Sigmoid colon (tissue), 7 donors: ENCODE measurements at regions of chr5 and their contacts with region 1.

Region 1: GRCh38 chr5:56270568-56271392 is 37.6 kb upstream of the ANKRD55 start:
- DNase-seq: peak; percentile 89
- H3K4me3 ChIP-seq: no peak overlapping the region
- H3K27ac ChIP-seq: no peak overlapping the region
- H3K4me1 ChIP-seq: peaks cover 0 to 11% (median 2%) of the 10 kb centered on the region in 4 donors
- H3K27me3 ChIP-seq: no peaks in the 10 kb centered on the region
- CTCF ChIP-seq: peak; percentile 87 to 97 (median 95)
- EP300 ChIP-seq: no peak
- POLR2A ChIP-seq: no peak

Region 2: DNA sequence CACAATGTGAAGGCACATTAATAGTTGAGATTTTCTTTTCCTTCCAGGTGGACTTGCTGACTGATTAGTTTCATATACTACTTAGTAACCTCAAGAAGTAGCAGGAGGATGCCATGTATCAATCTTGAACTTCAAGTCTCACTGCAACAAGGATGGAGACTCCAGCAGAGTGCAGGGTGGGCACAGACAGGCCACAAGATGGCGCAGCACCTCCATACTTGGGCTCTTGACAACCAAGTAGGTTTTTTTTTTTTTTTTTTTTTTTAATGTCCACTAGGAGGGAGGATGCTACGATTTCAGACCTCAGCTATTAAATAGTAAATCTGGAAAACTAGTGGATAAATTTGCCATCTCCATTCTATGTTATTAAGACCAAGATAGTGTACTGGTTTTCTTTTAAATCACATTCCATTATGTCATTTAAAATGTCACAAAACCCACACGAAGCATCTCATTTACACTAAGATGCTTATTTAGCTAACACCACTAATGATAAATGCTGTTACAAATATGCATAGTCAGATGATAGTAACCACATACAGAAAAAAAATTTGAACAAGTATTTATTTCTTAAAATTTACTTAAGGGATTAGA is 334.6 kb before region 1 on chr5:
- intact Hi-C with region 1: loop called (anchors 10 kb)
- DNase-seq: peak; percentile 87
- H3K4me3 ChIP-seq: no peak overlapping the region
- H3K27ac ChIP-seq: no peak overlapping the region
- H3K4me1 ChIP-seq: no peaks in the 10 kb centered on the region
- H3K27me3 ChIP-seq: no peaks in the 10 kb centered on the region
- CTCF ChIP-seq: peak; percentile 52 to 75 (median 64)
- EP300 ChIP-seq: no peak
- POLR2A ChIP-seq: no peak

Region 3: DNA sequence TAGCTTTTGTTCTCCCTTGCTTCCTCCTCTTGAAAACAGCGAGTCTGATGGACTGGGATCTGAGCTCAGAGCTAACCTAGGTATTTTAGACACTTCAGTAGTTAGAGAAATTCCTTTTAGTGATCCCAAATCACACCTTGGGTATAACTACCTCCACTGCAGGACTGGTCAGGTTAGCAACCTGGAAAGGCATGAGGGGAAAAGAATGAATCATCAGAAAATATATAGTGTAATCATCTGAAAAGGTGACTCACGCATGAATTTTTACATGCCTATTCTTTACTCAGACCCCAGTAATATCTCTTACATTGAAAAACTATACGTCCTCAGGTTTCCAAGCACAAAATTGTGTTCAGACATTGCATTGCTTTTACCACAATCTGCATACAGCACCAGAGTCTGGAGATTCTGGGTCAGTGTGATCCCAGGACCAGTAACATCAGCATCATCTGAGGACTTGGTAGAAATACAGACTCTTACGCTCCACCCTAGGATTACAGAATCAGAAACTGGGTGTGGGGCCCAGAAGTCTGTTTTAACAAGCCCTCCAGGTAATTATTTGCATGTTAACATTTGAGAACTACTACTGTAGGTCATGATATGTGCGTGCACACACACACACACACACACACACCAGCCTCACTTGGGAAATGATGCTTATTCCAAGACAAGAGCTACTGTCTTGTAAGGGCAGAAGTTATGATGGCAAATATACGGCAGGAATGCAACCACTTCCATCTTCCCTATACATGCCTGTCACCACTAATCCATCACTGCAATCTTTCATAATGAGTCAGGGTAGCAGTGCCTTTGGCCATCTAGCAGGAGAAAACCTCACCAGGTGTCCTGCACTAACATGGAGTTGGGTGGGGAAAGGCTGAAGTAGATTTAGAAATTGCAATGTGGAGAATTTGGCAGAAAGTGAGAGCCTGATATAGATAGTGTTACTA is 272.9 kb after region 1 on chr5:
- intact Hi-C with region 1: no loop called
- DNase-seq: no peak
- H3K4me3 ChIP-seq: no peak overlapping the region
- H3K27ac ChIP-seq: no peak overlapping the region
- H3K4me1 ChIP-seq: no peaks in the 10 kb centered on the region
- H3K27me3 ChIP-seq: no peaks in the 10 kb centered on the region
- CTCF ChIP-seq: no peak
- EP300 ChIP-seq: no peak
- POLR2A ChIP-seq: no peak

Region 4: DNA sequence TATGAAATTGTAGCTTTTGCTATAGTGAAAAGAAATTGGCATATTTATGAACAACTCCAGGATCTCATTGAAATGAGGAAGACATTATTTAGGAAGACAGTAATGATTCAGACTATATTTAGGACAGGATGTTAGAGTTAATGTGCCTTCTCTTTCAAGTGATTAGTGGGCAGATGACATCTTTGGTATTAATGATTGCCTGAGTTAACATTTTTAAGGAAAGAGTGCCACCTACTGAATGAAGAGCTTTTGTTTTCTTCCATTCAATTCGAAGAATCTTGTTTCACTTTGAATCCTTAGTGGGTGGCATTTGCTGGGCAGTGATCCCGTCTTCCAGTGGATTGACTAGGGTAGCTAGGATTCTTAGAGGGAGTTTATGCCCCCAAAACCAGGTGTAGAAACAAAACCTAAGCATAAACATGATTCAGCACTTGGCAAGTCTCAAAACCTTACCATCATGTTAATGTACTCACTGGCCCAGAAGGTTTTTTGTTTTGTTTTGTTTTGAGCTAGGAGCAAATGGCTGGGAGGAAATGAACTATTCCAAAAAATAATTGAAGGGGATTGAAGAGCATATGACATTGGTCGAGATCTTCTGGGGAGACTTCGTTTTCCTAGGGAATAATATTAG is 567.7 kb after region 1 on chr5:
- intact Hi-C with region 1: loop called (anchors 1 kb)
- DNase-seq: no peak
- H3K4me3 ChIP-seq: peak overlapping the region in 2 of 4 donors; percentile 14 to 20
- H3K27ac ChIP-seq: peak overlapping the region in 3 of 4 donors; percentile 46 to 61 (median 60)
- H3K4me1 ChIP-seq: peaks cover 0 to 28% (median 9%) of the 10 kb centered on the region in 4 donors
- H3K27me3 ChIP-seq: no peaks in the 10 kb centered on the region
- CTCF ChIP-seq: peak; percentile 40 to 57 (median 46)
- EP300 ChIP-seq: no peak
- POLR2A ChIP-seq: no peak

Region 5: DNA sequence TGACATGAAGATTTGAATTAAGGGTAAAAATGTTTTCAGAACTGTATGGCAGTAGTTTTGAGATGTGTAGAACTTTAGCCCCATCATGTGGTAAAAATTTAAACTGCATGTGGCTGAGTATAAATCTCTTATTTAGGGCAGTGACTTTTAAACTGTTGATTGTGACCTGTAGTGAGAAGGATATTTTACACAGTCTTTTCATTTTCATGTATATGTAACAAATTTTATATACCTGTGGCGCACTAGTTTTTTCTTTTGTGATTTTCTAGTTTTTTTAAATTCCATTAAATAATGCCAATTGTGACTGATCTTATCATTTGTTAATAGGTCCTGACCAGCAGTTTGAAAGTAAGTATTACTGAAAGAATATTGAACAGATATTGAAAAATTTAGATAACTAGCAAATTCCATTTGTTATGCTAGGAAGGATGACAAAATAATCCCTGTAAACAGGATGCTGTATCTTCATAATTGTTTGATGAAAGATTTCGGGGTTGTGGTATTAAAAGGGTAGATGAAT is 950.3 kb after region 1 on chr5:
- intact Hi-C with region 1: loop called (anchors 10 kb)
- DNase-seq: no peak
- H3K4me3 ChIP-seq: no peak overlapping the region
- H3K27ac ChIP-seq: peak overlapping the region in 1 of 4 donors; percentile 17
- H3K4me1 ChIP-seq: peaks cover 0 to 10% (median 5%) of the 10 kb centered on the region in 4 donors
- H3K27me3 ChIP-seq: no peaks in the 10 kb centered on the region
- CTCF ChIP-seq: peak; percentile 77 to 94 (median 86)
- EP300 ChIP-seq: no peak
- POLR2A ChIP-seq: no peak

Region 6: DNA sequence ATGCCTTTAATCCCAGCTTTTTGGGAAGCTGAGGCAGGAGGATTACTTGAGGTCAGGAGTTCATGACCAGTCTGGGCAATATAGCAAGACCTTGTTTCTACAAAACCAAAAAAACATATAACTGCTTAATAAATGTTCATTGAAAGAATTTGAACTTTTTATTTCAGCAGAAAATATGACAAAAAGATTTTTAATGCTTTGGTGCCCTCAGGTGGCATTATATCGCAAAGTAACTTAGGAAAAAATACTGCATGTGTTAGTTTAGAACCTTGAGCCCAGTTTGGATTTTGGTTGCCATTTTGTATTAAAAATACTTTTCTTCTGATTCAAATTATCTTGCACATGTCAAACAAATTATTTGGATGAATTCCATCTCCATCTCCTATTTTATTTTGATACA is 1006.3 kb after region 1 on chr5:
- intact Hi-C with region 1: loop called (anchors 5 kb)
- DNase-seq: no peak
- H3K4me3 ChIP-seq: no peak overlapping the region
- H3K27ac ChIP-seq: no peak overlapping the region
- H3K4me1 ChIP-seq: no peaks in the 10 kb centered on the region
- H3K27me3 ChIP-seq: no peaks in the 10 kb centered on the region
- CTCF ChIP-seq: peak in 1 of 4 experiments; percentile 9
- EP300 ChIP-seq: no peak
- POLR2A ChIP-seq: no peak